Naive thymus-derived CD4-positive, alpha-beta T cell (primary cell): ENCODE measurements at regions of chrX and their contacts with region 1.

Region 1: GRCh38 chrX:129759576-129760061 is 20.1 kb upstream of the SASH3 start:
- DNase-seq: peak in 8 of 9 donors; percentile 40 to 69 (median 59)
- ATAC-seq: peak; percentile 85
- H3K4me3 ChIP-seq: no peak overlapping the region
- H3K4me3 Mint-ChIP-seq: peak overlapping the region; percentile 8 to 64 (median 51)
- H3K27ac ChIP-seq: no peak overlapping the region
- H3K27ac Mint-ChIP-seq: peak overlapping the region in 7 of 9 donors; percentile 10 to 90 (median 31)
- H3K4me1 ChIP-seq: peaks cover 50 to 55% of the 10 kb centered on the region in 2 donors
- H3K4me1 Mint-ChIP-seq: peaks cover 16 to 67% (median 59%) of the 10 kb centered on the region in 7 donors
- H3K27me3 ChIP-seq: no peaks in the 10 kb centered on the region
- H3K27me3 Mint-ChIP-seq: no peaks in the 10 kb centered on the region

Region 2: DNA sequence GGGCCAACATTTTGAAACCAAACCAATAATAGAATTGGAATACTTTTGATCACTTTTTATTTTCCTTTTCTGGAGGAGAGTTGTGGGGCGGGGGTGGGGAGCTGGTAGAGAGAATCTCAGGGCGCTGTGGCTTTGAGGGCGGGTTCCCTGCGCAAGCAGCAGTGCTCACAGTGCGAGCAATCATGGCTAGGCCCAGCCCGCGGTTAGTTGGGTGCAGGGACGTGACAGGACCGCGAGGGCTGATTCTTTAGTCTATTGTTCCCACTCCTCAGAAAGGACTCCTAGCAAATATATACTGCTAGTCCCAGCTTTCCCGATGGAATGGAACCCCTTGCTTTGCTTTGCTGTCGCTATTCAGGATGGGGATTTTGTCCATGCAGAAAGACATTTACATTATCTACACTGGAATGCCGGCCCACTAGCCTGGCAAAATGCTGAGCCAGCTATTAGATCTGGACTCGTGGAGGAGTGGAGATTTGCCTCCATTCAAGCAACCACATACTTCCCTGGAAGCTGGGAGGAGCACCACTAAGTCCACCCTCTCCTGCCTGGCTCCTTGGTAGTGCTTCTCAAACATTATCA is 80.9 kb before region 1 on chrX:
- CTCF ChIA-PET with region 1: no interaction called
- POLR2A ChIA-PET with region 1: interaction called, 4 read pairs
- intact Hi-C with region 1: loop called in 1 of 2 experiments (anchors 1 kb)
- DNase-seq: peak in 7 of 9 donors; percentile 6 to 40 (median 34)
- ATAC-seq: peak; percentile 78
- H3K4me3 ChIP-seq: peak overlapping the region; percentile 53
- H3K4me3 Mint-ChIP-seq: peak overlapping the region; percentile 62 to 85 (median 70)
- H3K27ac ChIP-seq: peak overlapping the region; percentile 38
- H3K27ac Mint-ChIP-seq: peak overlapping the region in 7 of 9 donors; percentile 5 to 91 (median 48)
- H3K4me1 ChIP-seq: peaks cover 5 to 14% of the 10 kb centered on the region in 2 donors
- H3K4me1 Mint-ChIP-seq: peaks cover 10 to 36% (median 23%) of the 10 kb centered on the region in 7 donors
- H3K27me3 ChIP-seq: no peaks in the 10 kb centered on the region
- H3K27me3 Mint-ChIP-seq: peaks cover 0 to 21% (median 0%) of the 10 kb centered on the region in 5 donors

Region 3: DNA sequence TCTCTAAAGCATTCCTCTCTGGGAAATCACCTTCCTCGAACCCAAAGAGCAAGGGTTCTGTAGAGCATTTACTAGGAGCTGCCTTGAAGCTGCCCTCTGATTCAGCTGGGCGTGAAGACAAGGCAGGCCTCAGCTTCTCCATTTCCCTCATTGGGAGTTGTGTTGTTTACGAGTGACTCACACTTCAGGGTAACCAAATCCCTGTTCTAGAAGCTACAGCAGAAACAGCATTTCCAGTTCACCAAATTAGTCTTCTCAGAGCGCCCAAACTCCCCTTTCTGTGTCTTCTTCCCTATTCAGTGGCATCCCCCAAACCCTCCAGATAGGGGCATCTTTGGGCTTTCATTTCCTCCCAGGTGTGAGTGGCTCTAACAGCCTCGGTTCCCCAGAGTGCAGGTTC is 21.7 kb before region 1 on chrX:
- CTCF ChIA-PET with region 1: no interaction called
- POLR2A ChIA-PET with region 1: no interaction called
- intact Hi-C with region 1: loop called in 1 of 2 experiments (anchors 2 kb)
- DNase-seq: no peak
- ATAC-seq: peak; percentile 63
- H3K4me3 ChIP-seq: no peak overlapping the region
- H3K4me3 Mint-ChIP-seq: peak overlapping the region in 1 of 10 donors; percentile 42
- H3K27ac ChIP-seq: no peak overlapping the region
- H3K27ac Mint-ChIP-seq: peak overlapping the region in 2 of 9 donors; percentile 53 to 72
- H3K4me1 ChIP-seq: peaks cover 8 to 17% of the 10 kb centered on the region in 2 donors
- H3K4me1 Mint-ChIP-seq: peaks cover 14 to 45% (median 29%) of the 10 kb centered on the region in 7 donors
- H3K27me3 ChIP-seq: no peaks in the 10 kb centered on the region
- H3K27me3 Mint-ChIP-seq: no peaks in the 10 kb centered on the region

Region 4: GRCh38 chrX:129772796-129773431 is 13.3 kb after region 1 on chrX:
- CTCF ChIA-PET with region 1: interaction called, 6 read pairs
- POLR2A ChIA-PET with region 1: interaction called, 167 read pairs
- intact Hi-C with region 1: loop called (anchors 1 kb)
- DNase-seq: no peak
- ATAC-seq: peak; percentile 69
- H3K4me3 ChIP-seq: no peak overlapping the region
- H3K4me3 Mint-ChIP-seq: peak overlapping the region; percentile 44 to 79 (median 66)
- H3K27ac ChIP-seq: peak overlapping the region; percentile 49
- H3K27ac Mint-ChIP-seq: peak overlapping the region; percentile 86 to 98 (median 92)
- H3K4me1 ChIP-seq: peaks cover 75% of the 10 kb centered on the region in 2 donors
- H3K4me1 Mint-ChIP-seq: peaks cover 14 to 94% (median 70%) of the 10 kb centered on the region in 7 donors
- H3K27me3 ChIP-seq: no peaks in the 10 kb centered on the region
- H3K27me3 Mint-ChIP-seq: no peaks in the 10 kb centered on the region